Posterior vena cava (tissue), 2 donors: ENCODE measurements at regions of chr5 and their contacts with region 1.

Region 1: GRCh38 chr5:74107899-74108298 is 481.9 kb downstream of the ARHGEF28 start:
- DNase-seq: no peak

Region 2: GRCh38 chr5:74145946-74146345 is 38.0 kb after region 1 on chr5:
- intact Hi-C with region 1: loop called in 1 of 2 experiments (anchors 1 kb)
- DNase-seq: no peak